ENCODE measurements at regions of chr19 and their contacts with region 1.

Region 1: DNA sequence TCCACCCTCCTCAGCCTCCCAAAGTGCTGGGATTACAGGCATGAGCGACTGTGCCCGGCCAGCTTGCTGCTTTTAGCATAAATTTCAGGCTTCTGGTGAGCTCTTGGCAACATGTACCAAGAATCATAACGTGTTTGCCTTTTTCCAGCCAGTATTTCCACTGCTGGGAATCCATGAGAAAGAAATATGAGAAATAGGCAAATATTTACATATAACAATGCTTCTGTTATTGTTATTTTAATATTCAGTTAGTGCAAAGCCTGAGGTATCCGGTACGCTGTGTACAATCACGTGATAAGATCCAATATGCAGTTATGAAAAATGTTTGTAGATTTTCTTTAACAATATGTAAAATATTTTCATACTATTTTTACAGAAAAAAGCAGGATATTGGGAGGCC is 29.1 kb upstream of the CERS4 start:
- DNase-seq: no peak
- ATAC-seq: no peak
- H3K4me3 ChIP-seq: no peak overlapping the region
- H3K27ac ChIP-seq: no peak overlapping the region
- H3K4me1 ChIP-seq: no peaks in the 10 kb centered on the region
- H3K27me3 ChIP-seq: no peaks in the 10 kb centered on the region
- CTCF ChIP-seq: no peak

Region 2: GRCh38 chr19:7897292-7897691 is 282.8 kb before region 1 on chr19:
- CTCF ChIA-PET with region 1: interaction called, 10 read pairs
- POLR2A ChIA-PET with region 1: no interaction called
- in situ Hi-C with region 1: no loop called
- intact Hi-C with region 1: no loop called
- DNase-seq: no peak
- ATAC-seq: no peak
- H3K4me3 ChIP-seq: no peak overlapping the region
- H3K27ac ChIP-seq: no peak overlapping the region
- H3K4me1 ChIP-seq: no peaks in the 10 kb centered on the region; the same call in 1 of the 2 replicates
- H3K27me3 ChIP-seq: no peaks in the 10 kb centered on the region
- CTCF ChIP-seq: no peak

Region 3: GRCh38 chr19:7989071-7989575 is 190.9 kb before region 1 on chr19:
- CTCF ChIA-PET with region 1: no interaction called
- POLR2A ChIA-PET with region 1: no interaction called
- in situ Hi-C with region 1: no loop called
- intact Hi-C with region 1: no loop called
- DNase-seq: no peak
- ATAC-seq: no peak
- H3K4me3 ChIP-seq: no peak overlapping the region
- H3K27ac ChIP-seq: no peak overlapping the region
- H3K4me1 ChIP-seq: peaks cover 13% of the 10 kb centered on the region
- H3K27me3 ChIP-seq: no peaks in the 10 kb centered on the region
- CTCF ChIP-seq: no peak

Region 4: DNA sequence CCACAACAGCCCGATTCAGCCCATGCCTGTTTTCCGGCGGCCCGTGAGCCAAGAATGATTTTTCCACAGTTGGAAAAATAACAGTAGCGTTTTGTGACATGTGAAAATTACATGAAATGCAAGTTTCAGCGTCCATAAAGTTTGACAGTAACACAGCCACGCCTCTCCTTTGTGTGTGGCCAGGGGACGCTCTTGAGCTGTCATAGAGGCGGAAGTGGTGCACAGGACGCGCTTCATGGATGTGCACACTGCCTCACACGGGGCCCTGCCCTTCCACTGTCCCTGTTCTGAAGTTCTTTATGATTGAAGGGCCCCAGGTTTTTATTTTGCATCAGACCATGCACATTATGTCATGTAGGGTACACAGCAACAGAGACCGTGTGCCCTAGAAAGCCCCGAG is 162.3 kb before region 1 on chr19:
- CTCF ChIA-PET with region 1: no interaction called
- POLR2A ChIA-PET with region 1: interaction called, 10 read pairs
- in situ Hi-C with region 1: no loop called
- intact Hi-C with region 1: no loop called
- DNase-seq: no peak
- ATAC-seq: no peak
- H3K4me3 ChIP-seq: no peak overlapping the region
- H3K27ac ChIP-seq: no peak overlapping the region
- H3K4me1 ChIP-seq: no peaks in the 10 kb centered on the region
- H3K27me3 ChIP-seq: no peaks in the 10 kb centered on the region
- CTCF ChIP-seq: no peak